GM12878 (cell line): ENCODE measurements at regions of chr6 and their contacts with region 1.

Region 1: GRCh38 chr6:45421709-45422502 is 44.2 kb upstream of the SUPT3H start:
- DNase-seq: no peak
- ATAC-seq: peak; percentile 49
- H3K4me3 ChIP-seq: peak overlapping the region; percentile 48; the same call in 1 of the 2 replicates
- H3K27ac ChIP-seq: no peak overlapping the region
- H3K4me1 ChIP-seq: no peaks in the 10 kb centered on the region; the same call in 1 of the 2 replicates
- H3K27me3 ChIP-seq: peaks cover 20 to 38% of the 10 kb centered on the region in 2 experiments
- CTCF ChIP-seq: peak in 2 of 3 experiments; percentile 10 to 15; a peak in 1 of 6 replicates
- EP300 ChIP-seq: no peak
- POLR2A ChIP-seq: no peak
- RAD21 ChIP-seq: no peak

Region 2: DNA sequence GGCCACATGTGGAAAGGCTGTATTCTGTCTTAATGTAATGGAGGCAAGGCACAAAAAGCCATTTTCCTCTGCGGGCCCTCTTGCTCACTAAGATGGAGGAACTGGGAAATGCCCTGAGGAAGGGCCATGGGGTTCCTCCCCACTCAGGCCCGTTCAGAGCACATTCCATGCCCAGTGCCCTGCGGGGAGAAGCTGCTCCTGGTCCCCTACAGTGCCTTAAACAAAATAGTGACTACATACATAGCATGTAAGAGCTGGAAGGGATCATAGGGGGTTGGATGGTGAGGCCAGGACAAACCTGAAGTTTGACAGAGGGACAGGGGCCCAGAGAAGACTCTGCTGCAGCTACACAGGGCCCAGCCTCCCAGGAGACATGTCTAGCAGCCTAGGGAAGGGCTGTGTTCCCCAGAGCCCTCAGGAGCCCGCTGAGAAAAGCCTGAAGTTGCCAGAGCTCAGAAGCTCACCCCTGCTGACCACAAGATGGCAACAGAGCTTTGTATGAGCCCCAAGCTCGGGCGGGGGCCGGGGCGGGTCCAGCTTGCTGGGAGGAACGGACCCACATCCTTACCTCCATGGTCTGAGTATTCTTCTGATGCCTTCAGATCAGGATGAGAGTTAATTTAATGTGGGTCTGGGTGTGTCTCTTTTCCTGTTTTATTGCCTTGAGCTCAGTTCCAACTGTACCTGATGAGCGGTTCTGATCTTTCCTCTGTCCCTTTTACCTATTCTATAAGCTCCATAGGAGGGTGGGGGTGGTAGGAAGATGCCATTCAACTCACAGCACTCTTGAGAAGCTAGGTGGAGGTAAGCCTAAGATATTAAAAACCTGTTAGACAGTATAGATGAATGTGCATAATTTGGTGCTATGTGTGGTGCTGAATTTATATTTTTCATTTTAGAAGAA is 791.5 kb before region 1 on chr6:
- CTCF ChIA-PET with region 1: no interaction called
- POLR2A ChIA-PET with region 1: no interaction called
- RAD21 ChIA-PET with region 1: interaction called, 4 read pairs
- SMC1A ChIA-PET with region 1: no interaction called
- in situ Hi-C with region 1: no loop called
- intact Hi-C with region 1: loop called (anchors 10 kb)
- DNase-seq: no peak
- ATAC-seq: peak; percentile 88
- H3K4me3 ChIP-seq: no peak overlapping the region
- H3K27ac ChIP-seq: no peak overlapping the region
- H3K4me1 ChIP-seq: no peaks in the 10 kb centered on the region
- H3K27me3 ChIP-seq: peaks cover 1 to 3% of the 10 kb centered on the region in 2 experiments; a peak in 2 of 4 replicates
- CTCF ChIP-seq: peak; percentile 33 to 59 (median 49); a peak in 5 of 6 replicates
- EP300 ChIP-seq: no peak
- POLR2A ChIP-seq: no peak
- RAD21 ChIP-seq: peak; percentile 36; the same call in 1 of the 2 replicates

Region 3: GRCh38 chr6:44642870-44643529 is 778.9 kb before region 1 on chr6:
- CTCF ChIA-PET with region 1: no interaction called
- POLR2A ChIA-PET with region 1: no interaction called
- RAD21 ChIA-PET with region 1: no interaction called
- SMC1A ChIA-PET with region 1: no interaction called
- in situ Hi-C with region 1: loop called (anchors 10 kb)
- intact Hi-C with region 1: loop called (anchors 10 kb)
- DNase-seq: no peak
- ATAC-seq: peak; percentile 69
- H3K4me3 ChIP-seq: no peak overlapping the region
- H3K27ac ChIP-seq: no peak overlapping the region
- H3K4me1 ChIP-seq: no peaks in the 10 kb centered on the region
- H3K27me3 ChIP-seq: no peaks in the 10 kb centered on the region; a peak in 1 of 4 replicates
- CTCF ChIP-seq: no peak
- EP300 ChIP-seq: no peak
- POLR2A ChIP-seq: no peak
- RAD21 ChIP-seq: no peak

Region 4: GRCh38 chr6:45086360-45087084 is 335.4 kb before region 1 on chr6:
- CTCF ChIA-PET with region 1: interaction called, 3 read pairs
- POLR2A ChIA-PET with region 1: no interaction called
- RAD21 ChIA-PET with region 1: no interaction called
- SMC1A ChIA-PET with region 1: no interaction called
- in situ Hi-C with region 1: no loop called
- intact Hi-C with region 1: loop called (anchors 10 kb)
- DNase-seq: no peak
- ATAC-seq: no peak
- H3K4me3 ChIP-seq: no peak overlapping the region
- H3K27ac ChIP-seq: no peak overlapping the region
- H3K4me1 ChIP-seq: no peaks in the 10 kb centered on the region
- H3K27me3 ChIP-seq: no peaks in the 10 kb centered on the region; a peak in 1 of 4 replicates
- CTCF ChIP-seq: no peak
- EP300 ChIP-seq: no peak
- POLR2A ChIP-seq: no peak
- RAD21 ChIP-seq: no peak

Region 5: DNA sequence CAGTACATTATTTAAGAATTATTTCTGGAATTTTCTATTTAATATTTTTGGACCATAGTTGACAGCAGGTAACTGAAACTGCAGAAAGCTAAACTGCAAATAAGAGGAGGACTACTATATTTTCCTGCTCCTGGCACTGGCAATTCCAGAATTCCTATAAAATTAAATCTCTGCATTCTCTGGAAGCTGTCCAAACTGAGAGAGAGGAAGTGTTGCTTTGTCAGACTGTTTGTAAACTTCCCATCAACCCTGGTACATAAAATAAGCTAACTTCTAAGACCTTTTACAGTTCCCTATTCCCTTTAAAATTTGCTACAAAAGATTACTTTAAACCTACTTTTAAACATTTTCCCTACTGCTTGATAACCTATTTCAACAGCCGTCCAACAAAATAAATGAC is 289.8 kb before region 1 on chr6:
- CTCF ChIA-PET with region 1: no interaction called
- POLR2A ChIA-PET with region 1: no interaction called
- RAD21 ChIA-PET with region 1: no interaction called
- SMC1A ChIA-PET with region 1: no interaction called
- in situ Hi-C with region 1: no loop called
- intact Hi-C with region 1: no loop called
- DNase-seq: no peak
- ATAC-seq: no peak
- H3K4me3 ChIP-seq: no peak overlapping the region
- H3K27ac ChIP-seq: no peak overlapping the region
- H3K4me1 ChIP-seq: no peaks in the 10 kb centered on the region
- H3K27me3 ChIP-seq: no peaks in the 10 kb centered on the region
- CTCF ChIP-seq: no peak
- EP300 ChIP-seq: no peak
- POLR2A ChIP-seq: no peak
- RAD21 ChIP-seq: no peak